Right ventricle myocardium inferior (tissue), 1 donor: ENCODE measurements at regions of chr2 and their contacts with region 1.

Region 1: GRCh38 chr2:128232965-128233789 is 85.5 kb downstream of the HS6ST1 start:
- DNase-seq: peak; percentile 96
- ATAC-seq: peak; percentile 98

Region 2: GRCh38 chr2:127884436-127885345 is 348.5 kb before region 1 on chr2:
- intact Hi-C with region 1: loop called (anchors 5 kb)
- DNase-seq: no peak
- ATAC-seq: no peak

Region 3: DNA sequence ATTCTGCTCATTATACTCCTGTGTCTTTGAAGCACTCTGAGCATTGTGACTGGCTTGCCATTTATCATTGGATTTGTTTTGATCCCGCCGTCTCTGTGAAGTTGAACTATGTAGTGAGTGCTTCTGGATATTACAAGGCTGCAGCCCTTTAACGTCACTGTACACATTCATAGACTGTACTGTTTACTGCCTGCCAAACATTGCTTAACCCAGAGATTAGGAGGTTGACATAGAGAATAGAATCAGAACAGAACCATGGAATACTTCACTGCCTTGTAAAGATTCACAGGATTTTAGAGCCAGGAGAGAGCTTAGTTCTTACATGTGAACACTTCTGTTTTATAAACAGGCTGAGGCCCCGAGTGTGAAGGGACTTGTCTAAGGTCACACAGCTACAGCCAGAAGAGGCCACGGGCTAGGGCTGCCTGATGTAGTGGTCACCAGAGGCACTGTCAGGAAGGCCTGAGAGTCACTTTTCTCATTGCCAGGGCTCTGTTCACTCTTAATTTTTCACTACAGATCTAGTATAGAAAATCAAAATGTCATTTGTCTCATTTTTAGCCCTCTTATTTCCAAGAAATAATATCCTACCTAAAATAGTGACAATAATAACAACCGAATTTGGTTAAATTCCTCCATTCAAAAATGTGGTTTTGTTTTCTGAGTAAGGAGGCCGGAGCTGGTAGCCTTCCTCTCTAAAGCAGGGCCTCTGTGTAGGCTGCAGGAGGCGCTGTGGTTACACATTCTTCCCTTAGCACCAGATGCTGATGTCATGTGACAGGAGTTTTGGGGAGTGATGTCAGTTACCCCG is 54.3 kb before region 1 on chr2:
- intact Hi-C with region 1: loop called (anchors 2 kb)
- DNase-seq: no peak
- ATAC-seq: peak; percentile 95

Region 4: GRCh38 chr2:128187032-128187654 is 46.0 kb before region 1 on chr2:
- intact Hi-C with region 1: loop called (anchors 2 kb)
- DNase-seq: no peak
- ATAC-seq: peak; percentile 44

Region 5: GRCh38 chr2:128196471-128196931 is 36.7 kb before region 1 on chr2:
- intact Hi-C with region 1: loop called (anchors 2 kb)
- DNase-seq: no peak
- ATAC-seq: peak; percentile 42

Region 6: GRCh38 chr2:128280158-128280871 is 47.1 kb after region 1 on chr2:
- intact Hi-C with region 1: no loop called
- DNase-seq: peak; percentile 71
- ATAC-seq: no peak

Region 7: DNA sequence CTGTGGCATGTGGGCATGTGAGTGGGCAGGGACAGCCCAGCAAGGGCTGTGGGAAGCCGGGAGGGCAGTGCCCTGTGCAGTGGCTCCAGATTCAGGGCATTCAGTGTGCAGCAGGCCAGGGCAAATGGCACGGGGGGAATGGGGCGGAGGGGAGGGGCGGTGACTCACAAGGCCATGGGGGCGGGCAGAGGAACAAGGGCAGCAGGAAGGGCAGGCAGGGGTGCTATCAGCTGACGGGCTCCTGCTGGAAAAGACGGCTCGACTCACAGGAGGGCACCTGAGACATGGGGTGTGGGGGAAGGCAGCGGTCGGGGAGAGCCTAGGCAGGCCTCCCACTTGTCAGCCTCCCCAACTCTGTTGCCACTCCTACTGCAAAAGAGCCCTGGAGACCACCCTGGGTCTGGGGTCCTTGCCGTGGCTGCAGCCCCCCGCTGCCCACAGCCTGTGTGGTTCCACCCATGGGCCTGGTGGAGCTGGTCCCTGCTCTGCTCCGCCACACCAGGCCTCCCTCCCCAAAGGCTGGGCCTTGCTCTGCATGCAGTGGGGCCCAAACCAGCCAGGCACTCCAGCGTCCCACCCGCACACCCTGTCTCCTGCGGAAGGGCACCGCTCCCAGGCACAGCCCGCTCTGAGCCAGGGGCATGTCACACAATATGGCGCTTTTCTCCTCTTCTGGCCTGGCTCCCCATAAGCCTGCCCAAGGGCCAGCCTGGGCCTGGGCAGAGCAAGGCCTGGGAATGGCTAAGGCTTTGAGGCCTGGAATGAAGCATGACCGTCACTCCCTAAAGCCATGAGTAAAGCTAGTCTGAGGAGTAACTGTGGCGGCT is 59.6 kb after region 1 on chr2:
- intact Hi-C with region 1: no loop called
- DNase-seq: peak; percentile 31
- ATAC-seq: peak; percentile 56

Region 8: DNA sequence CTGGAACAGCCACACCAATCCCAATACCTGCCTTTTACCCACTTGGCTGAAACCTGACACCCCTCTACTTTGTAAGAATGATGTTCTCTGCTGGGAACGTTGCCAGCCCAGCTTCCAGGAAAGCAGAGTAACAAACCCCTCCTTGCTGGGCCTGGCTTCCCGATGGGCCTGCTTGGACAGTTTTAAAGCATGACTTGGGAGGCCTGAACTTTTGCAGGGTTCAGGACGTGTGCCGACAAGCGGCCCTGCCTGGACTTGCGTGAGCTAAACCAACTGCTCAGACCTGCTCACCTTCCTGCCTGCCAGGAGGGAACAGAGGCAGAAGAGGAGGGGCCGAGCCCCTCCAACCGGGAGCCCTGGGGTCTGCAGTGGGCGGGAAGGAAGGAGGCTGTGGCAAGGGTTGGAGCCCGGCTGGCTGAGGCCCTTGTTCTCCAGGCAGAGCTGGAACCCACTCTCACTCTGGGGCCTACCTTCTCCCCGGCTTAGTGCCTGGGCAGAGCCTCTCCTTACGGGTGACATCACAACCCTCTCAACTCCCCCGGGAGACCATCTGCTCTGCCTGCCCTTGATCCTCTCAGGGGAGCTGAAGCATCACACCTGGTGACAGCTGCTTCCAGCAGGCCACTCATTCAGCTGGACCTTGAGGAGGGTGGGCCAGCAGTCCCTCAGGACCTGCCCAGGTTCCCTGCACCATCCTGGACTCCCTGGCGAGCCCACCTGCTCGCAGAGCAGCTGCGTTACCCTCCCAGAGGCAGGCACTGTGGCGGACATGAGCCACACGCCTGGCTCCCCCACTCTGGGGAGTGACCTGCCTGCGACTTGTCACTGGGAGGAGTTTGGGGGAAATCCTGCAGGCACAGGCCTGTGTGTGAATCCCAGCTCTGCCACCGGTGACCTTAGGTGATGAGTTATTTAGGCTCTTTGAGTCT is 72.2 kb after region 1 on chr2:
- intact Hi-C with region 1: loop called (anchors 2 kb)
- DNase-seq: peak; percentile 84
- ATAC-seq: peak; percentile 71